Heart left ventricle (tissue), 16 donors: ENCODE measurements at regions of chr6 and their contacts with region 1.

Region 1: GRCh38 chr6:116680975-116681808 is at the start of gene KPNA5:
- DNase-seq: peak; percentile 90 to 94 (median 94)
- ATAC-seq: peak; percentile 97 to 99 (median 98)
- H3K4me3 ChIP-seq: peak within 1 kb of the TSS; percentile 46 to 96 (median 77)
- H3K27ac ChIP-seq: peak within 1 kb of the TSS; percentile 67 to 95 (median 92)
- H3K4me1 ChIP-seq: peaks cover 0 to 29% (median 9%) of the 10 kb centered on the region in 12 donors
- H3K27me3 ChIP-seq: no peaks in the 10 kb centered on the region
- CTCF ChIP-seq: no peak
- POLR2A ChIP-seq: peak in 1 of 2 donors; percentile 79
- total RNA-seq, gene KPNA5: 3.1 to 12.5 (median 9.1) TPM

Region 2: GRCh38 chr6:116605935-116606334 is 75.3 kb before region 1 on chr6:
- intact Hi-C with region 1: no loop called
- DNase-seq: no peak
- ATAC-seq: no peak
- H3K4me3 ChIP-seq: no peak overlapping the region
- H3K27ac ChIP-seq: no peak overlapping the region
- H3K4me1 ChIP-seq: no peaks in the 10 kb centered on the region
- H3K27me3 ChIP-seq: no peaks in the 10 kb centered on the region
- CTCF ChIP-seq: no peak
- POLR2A ChIP-seq: no peak

Region 3: GRCh38 chr6:116667623-116668022 is 13.6 kb before region 1 on chr6:
- intact Hi-C with region 1: loop called in 1 of 10 experiments (anchors 1 kb)
- DNase-seq: no peak
- ATAC-seq: no peak
- H3K4me3 ChIP-seq: peak overlapping the region; percentile 69 to 99 (median 88)
- H3K27ac ChIP-seq: peak overlapping the region in 2 of 12 donors; percentile 77 to 87
- H3K4me1 ChIP-seq: peaks cover 0 to 37% (median 19%) of the 10 kb centered on the region in 12 donors
- H3K27me3 ChIP-seq: no peaks in the 10 kb centered on the region
- CTCF ChIP-seq: no peak
- POLR2A ChIP-seq: no peak